ENCODE measurements at regions of chr5 and their contacts with region 1.

Region 1: DNA sequence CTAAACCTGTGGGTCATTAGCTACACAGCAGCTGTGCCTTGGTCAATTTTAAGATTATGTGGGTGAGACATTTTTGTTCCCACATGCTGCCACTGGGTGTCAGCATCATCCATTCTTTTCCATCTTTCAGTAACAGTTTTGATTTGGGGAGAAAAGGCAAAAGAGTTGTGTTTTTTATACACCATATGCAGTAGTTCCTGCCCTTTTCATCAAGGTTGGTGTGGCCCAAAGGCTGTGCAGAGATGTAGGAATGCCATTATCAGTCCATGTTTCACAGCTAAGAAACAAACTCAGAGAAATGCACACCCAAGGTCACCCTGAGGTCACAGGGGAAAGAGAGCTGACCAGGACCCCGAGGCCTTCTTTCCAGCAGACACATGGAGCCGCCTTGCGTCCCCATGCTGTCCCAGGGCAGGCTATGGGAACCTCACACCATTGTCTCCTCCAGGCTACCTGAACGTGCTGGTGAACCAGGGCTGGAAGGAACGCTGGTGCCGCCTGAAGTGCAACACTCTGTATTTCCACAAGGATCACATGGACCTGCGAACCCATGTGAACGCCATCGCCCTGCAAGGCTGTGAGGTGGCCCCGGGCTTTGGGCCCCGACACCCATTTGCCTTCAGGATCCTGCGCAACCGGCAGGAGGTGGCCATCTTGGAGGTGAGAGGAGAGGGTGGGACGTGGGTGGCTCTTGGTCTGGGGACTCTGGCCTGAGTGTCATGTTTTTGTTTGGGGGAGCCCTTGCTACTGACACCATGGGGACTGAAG is 27.8 kb upstream of the GRPEL2 start:
- DNase-seq: no peak
- ATAC-seq: no peak
- H3K4me3 ChIP-seq: no peak overlapping the region
- H3K27ac ChIP-seq: no peak overlapping the region
- H3K4me1 ChIP-seq: peaks cover 21% of the 10 kb centered on the region
- H3K27me3 ChIP-seq: no peaks in the 10 kb centered on the region
- CTCF ChIP-seq: peak; percentile 72

Region 2: GRCh38 chr5:149254506-149254905 is 63.0 kb before region 1 on chr5:
- intact Hi-C with region 1: no loop called
- DNase-seq: no peak
- ATAC-seq: no peak
- H3K4me3 ChIP-seq: no peak overlapping the region
- H3K27ac ChIP-seq: no peak overlapping the region
- H3K4me1 ChIP-seq: no peaks in the 10 kb centered on the region
- H3K27me3 ChIP-seq: no peaks in the 10 kb centered on the region
- CTCF ChIP-seq: no peak

Region 3: DNA sequence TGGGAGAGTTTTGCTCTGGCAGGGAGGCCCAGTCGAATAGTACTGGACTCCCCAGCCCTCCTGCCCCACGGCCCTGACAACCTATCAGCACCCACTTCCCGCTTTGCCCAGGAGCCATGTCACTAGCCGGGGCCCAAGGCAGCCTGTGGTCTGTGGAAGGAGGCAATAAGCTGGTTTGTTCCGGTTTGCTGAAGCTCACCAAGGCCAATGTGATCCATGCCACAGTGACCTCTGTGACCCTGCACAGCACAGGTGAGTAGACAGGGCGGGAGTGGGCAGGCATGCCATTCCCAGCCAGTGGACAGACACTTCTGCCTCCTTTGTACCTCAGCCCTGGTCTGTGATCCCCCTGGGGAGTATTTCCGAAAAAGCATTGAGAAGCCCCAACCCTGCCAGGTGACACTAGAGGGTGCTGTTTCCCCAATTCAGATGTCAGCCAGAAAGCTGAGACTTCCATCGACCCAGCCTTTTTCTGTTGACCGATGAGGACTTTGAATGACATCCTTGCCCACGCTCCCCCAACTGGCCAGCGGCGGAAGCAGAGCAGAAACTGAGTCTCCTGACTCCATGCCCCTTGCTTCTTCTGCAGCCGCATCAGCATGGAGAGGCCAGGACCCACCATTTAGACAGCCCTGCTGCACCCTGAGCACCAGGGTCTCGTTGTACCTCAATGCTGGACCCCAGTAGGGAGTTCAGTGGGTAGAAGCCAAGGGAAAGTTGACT is 49.9 kb after region 1 on chr5:
- intact Hi-C with region 1: loop called (anchors 10 kb)
- DNase-seq: no peak
- ATAC-seq: peak; percentile 56 to 66
- H3K4me3 ChIP-seq: no peak overlapping the region
- H3K27ac ChIP-seq: no peak overlapping the region
- H3K4me1 ChIP-seq: no peaks in the 10 kb centered on the region
- H3K27me3 ChIP-seq: no peaks in the 10 kb centered on the region
- CTCF ChIP-seq: peak; percentile 74

Measured in lower lobe of right lung (tissue), 2 donors.